ENCODE measurements at regions of chr19 and their contacts with region 1.

Region 1: DNA sequence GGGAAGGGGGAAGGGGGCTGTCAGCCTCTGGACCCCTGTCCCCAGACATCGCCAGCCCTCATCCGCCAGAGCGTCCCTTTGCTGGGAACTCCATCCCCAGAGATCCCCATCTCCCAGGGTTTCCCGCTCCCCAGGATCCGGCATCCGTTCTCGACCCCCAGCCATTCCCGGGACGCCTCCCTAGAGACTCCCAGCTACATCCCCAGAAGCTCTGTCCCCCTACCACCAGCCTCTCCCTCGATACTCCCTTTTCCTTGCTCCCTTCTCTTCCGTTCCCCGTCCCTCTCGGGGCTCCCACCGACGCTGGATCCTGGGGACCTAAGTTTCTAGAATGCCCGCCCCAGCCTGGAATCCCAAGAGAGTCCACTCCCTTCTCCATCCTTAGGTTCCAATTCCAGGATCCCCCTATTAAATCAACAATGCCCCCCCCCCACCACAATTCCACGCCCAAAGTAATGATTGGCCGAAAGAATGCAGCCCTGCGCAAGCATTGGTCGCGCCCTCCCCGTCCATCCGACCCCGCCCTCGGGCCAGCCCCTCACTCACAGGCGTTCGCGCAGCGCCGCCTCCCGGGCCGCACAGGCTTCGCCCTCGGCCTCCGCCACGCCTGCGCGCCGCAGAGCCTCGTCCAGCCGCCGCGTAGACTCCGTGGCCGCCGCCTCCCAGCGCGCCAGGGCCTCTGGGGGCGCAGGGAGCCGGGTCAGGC is 3.2 kb downstream of the CCDC194 start:
- DNase-seq: peak; percentile 81 to 91
- ATAC-seq: peak; percentile 95 to 99
- H3K4me3 ChIP-seq: peak overlapping the region; percentile 48
- H3K27ac ChIP-seq: peak overlapping the region; percentile 62 to 78
- H3K4me1 ChIP-seq: peaks cover 4% of the 10 kb centered on the region; the same call in 1 of the 3 replicates
- CTCF ChIP-seq: peak; percentile 58
- EP300 ChIP-seq: no peak
- POLR2A ChIP-seq: peak; percentile 37; the same call in 1 of the 2 replicates
- RAD21 ChIP-seq: peak; percentile 37 to 63; a peak in 4 of 5 replicates

Region 2: GRCh38 chr19:17215125-17215971 is 175.5 kb before region 1 on chr19 and contains the start of gene USE1:
- CTCF ChIA-PET with region 1: no interaction called
- POLR2A ChIA-PET with region 1: no interaction called
- DNase-seq: peak; percentile 76 to 91
- ATAC-seq: peak; percentile 92 to 95
- H3K4me3 ChIP-seq: peak within 1 kb of the TSS; percentile 60
- H3K27ac ChIP-seq: peak within 1 kb of the TSS; percentile 97
- H3K4me1 ChIP-seq: peaks cover 14% of the 10 kb centered on the region
- CTCF ChIP-seq: no peak
- EP300 ChIP-seq: no peak
- POLR2A ChIP-seq: peak; percentile 66
- RAD21 ChIP-seq: no peak
- polyA plus RNA-seq, gene USE1: 10.1 and 10.2 TPM in 2 replicates

Region 3: DNA sequence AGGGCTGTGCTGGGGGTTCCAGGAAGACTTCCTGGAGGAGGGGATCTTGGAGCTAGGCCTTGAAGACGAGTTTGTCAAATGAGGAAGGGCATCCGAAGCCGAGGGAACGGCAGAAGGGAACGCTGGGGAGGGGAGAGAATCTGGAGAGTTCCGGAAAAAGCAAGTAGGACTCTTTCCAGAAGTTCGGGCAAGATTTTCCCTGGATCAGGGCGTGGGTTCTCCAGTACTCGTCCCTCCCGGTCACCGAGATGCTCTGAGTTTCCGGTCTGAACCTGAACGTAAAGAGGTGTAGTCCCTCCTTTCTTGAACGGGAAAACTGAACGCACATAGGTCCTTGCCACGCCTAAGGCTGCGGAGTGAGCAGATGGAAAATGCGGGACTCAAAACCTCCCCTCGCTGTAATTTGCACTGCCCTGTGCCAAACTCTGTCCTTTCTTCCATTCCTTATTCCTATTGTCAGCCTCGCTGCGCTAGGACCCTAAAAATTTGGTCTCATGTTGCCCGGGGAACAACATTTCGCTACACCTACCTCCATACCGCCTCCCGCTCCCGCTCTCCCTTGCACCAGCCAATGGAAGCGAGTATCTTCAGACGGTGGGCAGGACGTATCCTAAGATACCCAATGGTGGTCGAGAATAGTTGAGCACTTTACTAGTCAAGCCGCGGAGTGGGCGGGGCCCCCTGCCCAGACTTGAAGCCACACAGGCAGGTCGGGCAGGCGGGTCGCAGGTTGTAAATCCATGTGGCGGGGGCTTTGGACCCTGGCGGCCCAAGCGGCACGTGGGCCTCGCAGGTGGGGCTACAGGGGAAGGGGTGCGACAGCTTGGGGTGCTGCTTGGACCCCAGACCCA is 53.7 kb before region 1 on chr19 and contains the start of gene GTPBP3:
- CTCF ChIA-PET with region 1: interaction called, 111 read pairs
- POLR2A ChIA-PET with region 1: interaction called, 10 read pairs
- DNase-seq: peak; percentile 90 to 99
- ATAC-seq: peak; percentile 72 to 90
- H3K4me3 ChIP-seq: peak within 1 kb of the TSS; percentile 71
- H3K27ac ChIP-seq: peak within 1 kb of the TSS; percentile 95
- H3K4me1 ChIP-seq: peaks cover 29% of the 10 kb centered on the region
- CTCF ChIP-seq: no peak
- EP300 ChIP-seq: no peak
- POLR2A ChIP-seq: peak; percentile 47
- RAD21 ChIP-seq: no peak
- polyA plus RNA-seq, gene GTPBP3: 9.5 and 10.6 TPM in 2 replicates

Region 4: DNA sequence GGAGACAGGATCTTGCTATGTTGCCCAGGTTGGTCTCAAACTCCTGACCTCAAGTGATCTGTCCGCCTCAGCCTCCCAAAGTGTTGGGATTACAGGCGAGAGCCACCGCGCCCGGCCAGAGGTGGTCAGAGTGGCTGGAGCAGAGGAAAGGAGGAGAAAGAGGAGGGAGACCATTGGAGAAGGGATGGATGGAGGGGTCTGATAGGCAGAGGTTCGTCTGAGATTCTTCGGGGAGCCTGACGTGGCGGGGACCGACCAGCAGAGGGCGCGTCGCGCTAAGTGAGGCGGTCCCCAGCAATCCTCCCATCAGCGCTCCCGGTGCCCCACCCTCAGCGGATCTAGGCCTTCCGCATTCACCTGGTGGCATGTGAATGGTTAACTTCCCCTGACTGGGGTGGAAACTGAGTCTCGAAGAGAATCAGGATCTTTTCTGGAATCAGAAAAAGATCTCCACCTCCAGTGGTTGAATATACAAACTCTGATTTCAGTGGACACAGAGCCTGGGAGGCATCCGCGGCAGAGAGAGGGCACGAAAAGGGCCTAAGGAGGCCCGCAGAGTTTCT is 44.6 kb before region 1 on chr19:
- CTCF ChIA-PET with region 1: interaction called, 111 read pairs
- POLR2A ChIA-PET with region 1: no interaction called
- DNase-seq: peak; percentile 58 to 67
- ATAC-seq: peak; percentile 84 to 95
- H3K4me3 ChIP-seq: no peak overlapping the region
- H3K27ac ChIP-seq: peak overlapping the region in 1 of 2 experiments; percentile 54; a peak in 3 of 6 replicates
- H3K4me1 ChIP-seq: peaks cover 7% of the 10 kb centered on the region
- CTCF ChIP-seq: peak; percentile 82
- EP300 ChIP-seq: no peak
- POLR2A ChIP-seq: no peak
- RAD21 ChIP-seq: peak; percentile 70 to 78

Region 5: GRCh38 chr19:17352608-17353280 is 38.1 kb before region 1 on chr19:
- CTCF ChIA-PET with region 1: interaction called, 111 read pairs
- POLR2A ChIA-PET with region 1: no interaction called
- DNase-seq: no peak
- ATAC-seq: no peak; a peak in 1 of 6 replicates
- H3K4me3 ChIP-seq: no peak overlapping the region
- H3K27ac ChIP-seq: no peak overlapping the region
- H3K4me1 ChIP-seq: peaks cover 13% of the 10 kb centered on the region
- CTCF ChIP-seq: no peak
- EP300 ChIP-seq: no peak
- POLR2A ChIP-seq: no peak
- RAD21 ChIP-seq: no peak

Region 6: DNA sequence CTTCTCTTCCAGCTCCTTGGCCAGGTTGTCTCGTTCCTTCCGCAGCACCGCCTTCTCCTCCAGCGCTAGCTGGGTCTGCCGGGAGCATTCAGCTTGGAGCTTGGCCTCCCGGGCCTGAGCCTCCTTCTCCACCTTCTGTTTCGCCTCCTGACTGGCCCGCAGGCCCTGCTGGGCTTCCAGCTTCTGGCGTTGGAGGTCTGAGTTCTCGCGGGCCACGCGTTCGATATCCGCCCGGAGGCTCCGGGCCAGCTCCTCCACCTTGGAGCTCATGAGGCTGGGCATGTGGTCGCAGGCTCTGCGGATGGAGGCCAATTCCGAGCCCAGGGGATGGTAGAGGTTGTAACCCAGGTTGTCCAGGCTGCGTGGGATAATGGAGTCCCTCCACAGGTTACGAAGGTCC is 25.5 kb before region 1 on chr19:
- CTCF ChIA-PET with region 1: interaction called, 13 read pairs
- POLR2A ChIA-PET with region 1: no interaction called
- DNase-seq: no peak
- ATAC-seq: no peak
- H3K4me3 ChIP-seq: no peak overlapping the region
- H3K27ac ChIP-seq: no peak overlapping the region
- H3K4me1 ChIP-seq: no peaks in the 10 kb centered on the region
- CTCF ChIP-seq: no peak
- EP300 ChIP-seq: no peak
- POLR2A ChIP-seq: no peak
- RAD21 ChIP-seq: no peak

Region 7: GRCh38 chr19:17376935-17377600 is 13.8 kb before region 1 on chr19 and contains the start of gene PLVAP:
- CTCF ChIA-PET with region 1: interaction called, 21 read pairs
- POLR2A ChIA-PET with region 1: no interaction called
- DNase-seq: no peak
- ATAC-seq: no peak
- H3K4me3 ChIP-seq: no peak within 1 kb of the TSS
- H3K27ac ChIP-seq: no peak within 1 kb of the TSS
- H3K4me1 ChIP-seq: no peaks in the 10 kb centered on the region
- CTCF ChIP-seq: no peak
- EP300 ChIP-seq: no peak
- POLR2A ChIP-seq: no peak
- RAD21 ChIP-seq: no peak
- polyA plus RNA-seq, gene PLVAP: not detected in 2 replicates

Measured in A549 (cell line).